Activated CD8-positive, alpha-beta T cell treated with anti-CD3 and anti-CD28 coated beads for 36 hours (primary cell): ENCODE measurements at regions of chr13 and their contacts with region 1.

Region 1: DNA sequence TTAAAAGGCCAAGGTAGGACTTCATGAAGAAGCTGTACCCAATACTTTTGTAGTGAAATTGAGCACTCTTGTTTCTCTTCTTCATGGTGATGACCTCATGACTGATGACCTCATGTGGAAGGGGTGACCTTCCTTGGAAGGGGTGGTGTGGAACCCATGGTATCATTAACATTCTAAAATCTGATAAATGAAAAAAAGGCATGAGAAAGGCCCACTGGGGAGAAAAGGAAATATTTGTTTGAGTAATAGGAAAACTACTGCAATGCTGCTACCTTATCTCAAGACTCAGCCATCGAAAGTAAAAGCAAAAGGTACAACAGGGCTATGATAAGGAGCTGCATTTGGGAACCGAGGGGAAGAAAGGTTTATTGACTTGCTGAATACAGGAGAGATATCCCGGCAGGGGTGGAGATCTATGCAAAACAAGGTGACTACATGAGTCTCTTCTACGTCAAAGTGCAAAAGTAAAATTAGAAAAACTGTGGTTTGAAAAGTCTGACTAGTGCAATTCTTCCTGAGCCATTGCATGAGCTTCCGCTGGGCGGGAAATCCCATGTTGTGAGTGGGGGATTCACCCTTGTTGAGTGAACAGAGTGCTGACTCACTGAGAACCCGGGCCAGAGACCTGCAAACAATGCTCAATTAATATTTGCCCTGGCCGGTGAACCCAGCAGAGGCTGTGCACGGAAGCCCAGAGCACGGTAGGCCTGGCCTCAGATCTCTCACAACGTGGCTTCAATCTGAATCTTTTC is 138.9 kb upstream of the RFC3 start:
- DNase-seq: peak; percentile 87
- ATAC-seq: peak; percentile 92
- H3K4me3 Mint-ChIP-seq: peak overlapping the region; percentile 69
- H3K27ac Mint-ChIP-seq: peak overlapping the region; percentile 85
- H3K4me1 Mint-ChIP-seq: peaks cover 20% of the 10 kb centered on the region
- H3K27me3 Mint-ChIP-seq: peaks cover 13% of the 10 kb centered on the region
- CTCF ChIP-seq: no peak

Region 2: DNA sequence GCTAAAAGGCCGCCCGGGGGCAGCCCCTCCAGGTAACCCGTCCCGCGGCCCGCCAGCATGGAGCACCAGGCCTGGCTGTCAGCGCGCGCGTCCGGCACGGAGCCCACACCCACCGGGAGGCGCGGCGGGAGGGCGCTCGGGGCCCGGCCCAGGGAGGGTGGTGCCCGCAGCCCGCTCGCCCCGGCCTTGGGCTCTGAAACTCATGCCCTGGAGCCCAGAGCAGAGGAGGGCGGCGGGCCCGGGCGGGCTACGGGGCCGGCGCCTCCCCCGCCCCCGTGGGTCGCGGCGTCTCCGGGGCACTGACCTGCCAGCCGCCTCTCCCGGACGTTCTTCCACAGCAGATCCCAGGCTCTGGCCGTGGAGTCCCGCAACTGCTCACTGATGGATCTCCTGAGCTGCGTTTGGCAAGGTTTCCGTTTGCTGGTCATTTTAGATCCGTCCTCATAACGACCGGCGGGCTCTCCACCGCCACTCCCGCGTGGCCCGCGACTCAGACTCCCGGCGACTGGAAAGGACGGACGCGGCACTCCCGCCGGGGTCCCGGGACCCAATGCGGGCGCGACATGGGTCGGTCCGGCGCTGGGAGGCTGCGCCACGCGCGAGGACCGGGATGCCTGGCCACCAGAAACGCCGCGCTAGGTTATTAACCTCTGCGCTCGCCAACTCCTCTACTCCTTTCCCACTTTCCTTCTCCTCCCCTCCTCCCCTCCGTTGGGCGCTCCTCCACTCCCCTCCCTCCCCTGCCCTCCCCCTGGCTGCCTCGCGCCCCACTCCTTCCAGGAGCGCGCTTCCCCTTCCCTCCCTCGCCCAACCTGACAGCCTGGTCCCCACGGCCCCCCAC is 328.9 kb before region 1 on chr13:
- CTCF ChIA-PET with region 1: no interaction called
- POLR2A ChIA-PET with region 1: no interaction called
- intact Hi-C with region 1: no loop called
- DNase-seq: no peak
- ATAC-seq: no peak
- H3K4me3 Mint-ChIP-seq: no peak overlapping the region
- H3K27ac Mint-ChIP-seq: no peak overlapping the region
- H3K4me1 Mint-ChIP-seq: peaks cover 2% of the 10 kb centered on the region
- H3K27me3 Mint-ChIP-seq: peaks cover 52% of the 10 kb centered on the region
- CTCF ChIP-seq: no peak

Region 3: DNA sequence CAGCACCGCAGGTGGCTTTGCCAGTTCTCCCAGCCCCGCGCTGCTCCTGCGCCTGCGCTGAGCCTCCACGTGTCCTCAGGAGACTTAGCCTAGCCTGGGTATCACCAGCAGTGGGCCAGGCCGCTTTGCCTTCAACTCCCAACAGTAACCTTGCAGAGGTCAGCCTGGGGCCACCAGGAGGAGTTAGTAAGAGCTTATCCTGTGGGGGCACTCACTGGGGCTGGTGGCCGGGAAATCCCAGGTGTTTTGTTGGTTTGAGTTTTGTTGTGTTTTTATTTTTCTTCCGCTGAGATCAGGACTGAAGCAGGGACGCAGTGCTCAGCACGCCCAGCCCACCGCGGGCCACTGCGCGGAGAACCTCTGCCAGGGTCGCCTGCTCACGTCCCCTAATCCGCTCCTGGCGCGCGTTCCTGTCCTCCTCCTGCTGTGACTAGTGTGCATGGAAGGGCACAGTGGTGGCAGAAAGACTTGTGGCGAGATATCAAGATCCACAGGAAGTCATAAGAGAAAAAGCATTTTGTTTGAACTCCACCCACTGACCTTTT is 68.5 kb before region 1 on chr13:
- CTCF ChIA-PET with region 1: no interaction called
- POLR2A ChIA-PET with region 1: no interaction called
- intact Hi-C with region 1: loop called (anchors 10 kb)
- DNase-seq: peak; percentile 73
- ATAC-seq: peak; percentile 61
- H3K4me3 Mint-ChIP-seq: peak overlapping the region; percentile 67
- H3K27ac Mint-ChIP-seq: peak overlapping the region; percentile 85
- H3K4me1 Mint-ChIP-seq: peaks cover 34% of the 10 kb centered on the region
- H3K27me3 Mint-ChIP-seq: peaks cover 7% of the 10 kb centered on the region
- CTCF ChIP-seq: no peak